ENCODE measurements at regions of chrX and their contacts with region 1.

Region 1: DNA sequence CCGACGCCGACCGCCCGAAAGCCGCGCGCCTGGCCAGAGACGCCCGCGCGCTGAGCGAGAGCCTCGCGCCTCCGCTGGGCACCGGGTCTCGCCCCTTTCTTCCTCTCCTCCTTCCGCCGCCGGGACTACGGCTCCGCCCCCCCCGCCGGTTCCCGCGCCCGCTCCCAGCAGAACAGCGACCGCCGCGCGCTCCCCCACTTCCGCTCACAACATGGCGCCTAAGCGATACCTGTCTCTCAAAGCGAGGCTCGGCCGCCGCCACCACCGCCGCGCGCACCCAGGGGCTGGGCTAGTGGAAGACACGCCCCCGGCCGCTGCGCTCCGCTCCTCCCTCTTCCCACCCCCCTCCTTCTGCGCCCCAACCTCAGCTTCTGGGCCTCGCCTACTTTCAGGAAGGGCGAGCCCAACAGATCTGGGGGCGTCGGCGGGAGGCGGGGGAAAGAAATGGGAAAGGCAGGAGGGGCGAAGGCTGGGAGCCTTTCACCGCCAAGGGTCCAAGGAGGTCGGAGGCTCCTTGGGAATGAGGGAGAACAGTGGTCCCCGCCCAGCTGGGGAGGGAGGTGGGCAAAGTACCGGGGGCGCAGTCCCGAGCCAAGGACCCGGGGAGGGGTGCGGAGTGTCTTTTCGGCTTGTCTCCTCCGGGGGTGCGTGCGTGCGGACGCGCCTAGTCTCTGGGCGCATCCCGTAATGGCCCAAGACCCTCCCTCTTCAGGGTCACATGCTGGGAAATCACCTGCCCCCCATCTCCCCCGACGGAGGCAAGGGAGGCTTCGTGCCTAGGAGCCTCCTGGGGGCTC is at the start of gene RPS6KA3:
- DNase-seq: peak; percentile 93
- ATAC-seq: peak; percentile 83
- H3K4me3 ChIP-seq: peak within 1 kb of the TSS; percentile 73 to 83 (median 77)
- H3K4me3 Mint-ChIP-seq: peak within 1 kb of the TSS; percentile 98
- H3K27ac ChIP-seq: peak within 1 kb of the TSS; percentile 78 to 88
- H3K27ac Mint-ChIP-seq: peak within 1 kb of the TSS; percentile 99
- H3K4me1 ChIP-seq: peaks cover 17 to 26% of the 10 kb centered on the region in 2 donors
- H3K4me1 Mint-ChIP-seq: peaks cover 20% of the 10 kb centered on the region
- H3K27me3 ChIP-seq: no peaks in the 10 kb centered on the region
- H3K27me3 Mint-ChIP-seq: no peaks in the 10 kb centered on the region
- CTCF ChIP-seq: no peak
- total RNA-seq, gene RPS6KA3: 63.0 and 64.0 TPM in 2 replicates

Region 2: GRCh38 chrX:18425199-18426003 is 1841.6 kb before region 1 on chrX and contains the start of gene CDKL5:
- CTCF ChIA-PET with region 1: no interaction called
- POLR2A ChIA-PET with region 1: no interaction called
- intact Hi-C with region 1: loop called (anchors 10 kb)
- DNase-seq: peak; percentile 95
- ATAC-seq: peak; percentile 92
- H3K4me3 ChIP-seq: peak within 1 kb of the TSS; percentile 71 to 91 (median 75)
- H3K4me3 Mint-ChIP-seq: peak within 1 kb of the TSS; percentile 92
- H3K27ac ChIP-seq: peak within 1 kb of the TSS; percentile 82 to 86
- H3K27ac Mint-ChIP-seq: peak within 1 kb of the TSS; percentile 94
- H3K4me1 ChIP-seq: peaks cover 8 to 12% of the 10 kb centered on the region in 2 donors
- H3K4me1 Mint-ChIP-seq: peaks cover 12% of the 10 kb centered on the region
- H3K27me3 ChIP-seq: no peaks in the 10 kb centered on the region
- H3K27me3 Mint-ChIP-seq: no peaks in the 10 kb centered on the region
- CTCF ChIP-seq: no peak
- total RNA-seq, gene CDKL5: 4.6 and 4.7 TPM in 2 replicates

Region 3: GRCh38 chrX:19964017-19964710 is 302.8 kb before region 1 on chrX:
- CTCF ChIA-PET with region 1: no interaction called
- POLR2A ChIA-PET with region 1: no interaction called
- intact Hi-C with region 1: no loop called
- DNase-seq: no peak
- ATAC-seq: no peak
- H3K4me3 ChIP-seq: no peak overlapping the region
- H3K4me3 Mint-ChIP-seq: no peak overlapping the region
- H3K27ac ChIP-seq: no peak overlapping the region
- H3K27ac Mint-ChIP-seq: no peak overlapping the region
- H3K4me1 ChIP-seq: no peaks in the 10 kb centered on the region
- H3K4me1 Mint-ChIP-seq: peaks cover 3% of the 10 kb centered on the region
- H3K27me3 ChIP-seq: no peaks in the 10 kb centered on the region
- H3K27me3 Mint-ChIP-seq: no peaks in the 10 kb centered on the region
- CTCF ChIP-seq: no peak

Region 4: DNA sequence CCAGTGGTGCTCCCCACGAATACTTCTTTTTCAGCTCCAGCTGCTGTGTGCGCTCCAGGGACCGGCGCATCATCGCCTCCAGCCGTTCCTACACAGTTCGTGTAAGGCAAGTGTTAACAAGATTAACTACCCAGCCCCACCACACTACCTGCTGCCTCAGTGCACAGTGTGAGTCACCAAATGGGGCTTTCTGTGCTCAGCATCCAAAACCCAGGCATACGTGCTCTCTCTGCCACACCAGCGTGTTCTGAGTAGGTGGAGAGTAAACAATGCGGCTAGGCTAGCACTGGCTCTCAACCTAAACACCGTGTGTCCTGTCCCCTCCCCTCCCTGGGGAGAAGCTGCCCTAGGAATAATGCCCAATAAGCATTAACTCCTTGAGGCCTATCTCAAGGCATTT is 210.3 kb before region 1 on chrX:
- CTCF ChIA-PET with region 1: no interaction called
- POLR2A ChIA-PET with region 1: no interaction called
- intact Hi-C with region 1: no loop called
- DNase-seq: no peak
- ATAC-seq: no peak
- H3K4me3 ChIP-seq: no peak overlapping the region
- H3K4me3 Mint-ChIP-seq: no peak overlapping the region
- H3K27ac ChIP-seq: no peak overlapping the region
- H3K27ac Mint-ChIP-seq: no peak overlapping the region
- H3K4me1 ChIP-seq: peaks cover 15 to 21% of the 10 kb centered on the region in 2 donors
- H3K4me1 Mint-ChIP-seq: peaks cover 18% of the 10 kb centered on the region
- H3K27me3 ChIP-seq: no peaks in the 10 kb centered on the region
- H3K27me3 Mint-ChIP-seq: no peaks in the 10 kb centered on the region
- CTCF ChIP-seq: no peak

Region 5: DNA sequence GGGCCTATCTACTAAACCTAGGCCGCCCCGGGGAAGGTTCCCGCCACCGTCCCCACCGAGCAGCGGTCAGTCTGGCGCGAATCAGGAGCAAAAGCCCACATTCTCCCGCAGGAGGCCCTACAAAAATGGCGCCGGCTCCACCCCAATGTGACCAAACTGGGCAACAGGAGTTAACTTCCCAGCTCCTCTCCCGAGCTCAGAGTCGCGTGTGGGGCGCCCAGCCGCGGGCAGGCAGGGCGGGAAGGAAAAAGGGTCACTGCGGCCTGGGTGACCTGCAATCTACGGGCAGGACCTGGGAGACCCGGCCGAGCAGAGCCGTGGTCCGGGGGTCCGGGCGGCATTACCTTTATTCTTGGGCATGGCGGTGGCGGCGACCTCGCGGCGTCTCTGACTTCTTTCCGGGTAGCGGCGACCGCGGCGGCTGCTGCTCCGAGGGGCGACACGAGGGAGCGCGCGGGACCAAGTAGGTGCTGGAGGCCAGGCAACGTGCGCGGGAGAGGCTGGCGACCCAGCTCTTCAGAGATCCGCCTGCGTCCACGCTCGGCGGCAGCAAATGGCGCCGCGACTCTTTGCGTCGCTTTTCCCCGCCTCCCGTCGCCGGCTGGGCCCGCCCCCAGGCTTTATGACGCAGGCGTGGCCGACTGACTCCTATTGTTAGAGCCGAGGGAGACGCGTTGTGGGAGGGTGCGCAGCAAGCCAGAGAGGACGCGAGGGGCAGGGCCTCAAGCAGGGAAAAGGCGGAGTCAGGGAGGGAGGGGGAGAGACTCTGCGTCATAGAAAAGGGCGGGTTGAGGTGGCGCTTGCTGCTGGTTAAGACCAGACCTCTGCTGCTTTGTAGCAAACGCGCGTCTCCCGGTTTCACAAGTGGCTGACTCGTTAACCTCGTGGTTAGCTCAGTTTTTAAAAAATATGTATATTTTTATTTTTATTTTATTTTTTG is 125.5 kb before region 1 on chrX and contains the start of gene EIF1AX:
- CTCF ChIA-PET with region 1: no interaction called
- POLR2A ChIA-PET with region 1: no interaction called
- intact Hi-C with region 1: loop called (anchors 1 kb)
- DNase-seq: peak; percentile 96
- ATAC-seq: peak; percentile 99
- H3K4me3 ChIP-seq: peak within 1 kb of the TSS; percentile 77 to 98 (median 86)
- H3K4me3 Mint-ChIP-seq: peak within 1 kb of the TSS; percentile 87
- H3K27ac ChIP-seq: peak within 1 kb of the TSS; percentile 74 to 92
- H3K27ac Mint-ChIP-seq: peak within 1 kb of the TSS; percentile 88
- H3K4me1 ChIP-seq: peaks cover 15 to 16% of the 10 kb centered on the region in 2 donors
- H3K4me1 Mint-ChIP-seq: peaks cover 21% of the 10 kb centered on the region
- H3K27me3 ChIP-seq: no peaks in the 10 kb centered on the region
- H3K27me3 Mint-ChIP-seq: no peaks in the 10 kb centered on the region
- CTCF ChIP-seq: no peak
- total RNA-seq, gene EIF1AX: 39.3 and 42.7 TPM in 2 replicates

Region 6: DNA sequence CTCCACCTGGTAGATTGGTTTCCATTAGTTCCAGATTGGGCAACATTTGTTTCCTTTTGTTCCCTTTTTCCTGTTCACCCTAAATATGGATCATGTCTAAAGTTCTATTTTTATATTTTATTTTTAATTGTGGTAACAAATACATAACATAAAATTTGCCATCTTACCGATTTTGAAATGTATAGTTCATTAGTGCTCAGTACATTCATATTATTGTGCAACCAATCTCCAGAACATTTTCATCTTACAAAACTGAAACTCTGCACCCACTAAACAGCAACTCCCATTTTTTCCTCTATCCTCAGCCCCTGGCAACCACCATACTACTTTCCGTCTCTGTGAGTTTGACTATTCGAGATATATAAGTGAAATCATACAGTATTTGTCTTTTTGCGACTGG is 13.9 kb after region 1 on chrX:
- CTCF ChIA-PET with region 1: no interaction called
- POLR2A ChIA-PET with region 1: no interaction called
- intact Hi-C with region 1: no loop called
- DNase-seq: no peak
- ATAC-seq: no peak
- H3K4me3 ChIP-seq: no peak overlapping the region
- H3K4me3 Mint-ChIP-seq: no peak overlapping the region
- H3K27ac ChIP-seq: no peak overlapping the region
- H3K27ac Mint-ChIP-seq: no peak overlapping the region
- H3K4me1 ChIP-seq: no peaks in the 10 kb centered on the region
- H3K4me1 Mint-ChIP-seq: no peaks in the 10 kb centered on the region
- H3K27me3 ChIP-seq: no peaks in the 10 kb centered on the region
- H3K27me3 Mint-ChIP-seq: peaks cover 6% of the 10 kb centered on the region
- CTCF ChIP-seq: no peak

Region 7: DNA sequence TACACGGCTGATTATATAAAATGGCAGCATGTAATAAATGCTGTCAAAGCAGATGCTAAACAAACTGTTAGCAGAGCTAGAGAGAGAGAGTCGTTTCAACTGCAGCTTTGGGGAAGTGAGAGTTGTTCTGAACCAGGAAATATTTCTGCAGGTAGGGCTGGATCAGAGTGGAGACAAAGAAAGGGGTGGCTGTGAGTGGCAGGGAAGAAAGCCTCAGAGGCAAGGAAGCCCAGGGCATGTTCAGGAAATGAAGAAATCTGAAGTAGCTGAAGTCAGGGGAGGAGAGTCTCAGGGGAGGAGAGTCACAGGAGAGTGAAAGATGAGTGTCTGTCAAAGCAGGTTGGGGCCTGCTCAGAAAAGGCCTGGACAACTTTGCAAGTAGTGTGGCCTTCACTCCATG is 48.1 kb after region 1 on chrX:
- CTCF ChIA-PET with region 1: no interaction called
- POLR2A ChIA-PET with region 1: interaction called, 3 read pairs
- intact Hi-C with region 1: loop called (anchors 2 kb)
- DNase-seq: peak; percentile 57
- ATAC-seq: peak; percentile 88
- H3K4me3 ChIP-seq: no peak overlapping the region
- H3K4me3 Mint-ChIP-seq: peak overlapping the region; percentile 7
- H3K27ac ChIP-seq: peak overlapping the region in 1 of 2 donors; percentile 20
- H3K27ac Mint-ChIP-seq: peak overlapping the region; percentile 87
- H3K4me1 ChIP-seq: peaks cover 33 to 47% of the 10 kb centered on the region in 2 donors
- H3K4me1 Mint-ChIP-seq: peaks cover 56% of the 10 kb centered on the region
- H3K27me3 ChIP-seq: no peaks in the 10 kb centered on the region
- H3K27me3 Mint-ChIP-seq: no peaks in the 10 kb centered on the region
- CTCF ChIP-seq: no peak

Region 8: DNA sequence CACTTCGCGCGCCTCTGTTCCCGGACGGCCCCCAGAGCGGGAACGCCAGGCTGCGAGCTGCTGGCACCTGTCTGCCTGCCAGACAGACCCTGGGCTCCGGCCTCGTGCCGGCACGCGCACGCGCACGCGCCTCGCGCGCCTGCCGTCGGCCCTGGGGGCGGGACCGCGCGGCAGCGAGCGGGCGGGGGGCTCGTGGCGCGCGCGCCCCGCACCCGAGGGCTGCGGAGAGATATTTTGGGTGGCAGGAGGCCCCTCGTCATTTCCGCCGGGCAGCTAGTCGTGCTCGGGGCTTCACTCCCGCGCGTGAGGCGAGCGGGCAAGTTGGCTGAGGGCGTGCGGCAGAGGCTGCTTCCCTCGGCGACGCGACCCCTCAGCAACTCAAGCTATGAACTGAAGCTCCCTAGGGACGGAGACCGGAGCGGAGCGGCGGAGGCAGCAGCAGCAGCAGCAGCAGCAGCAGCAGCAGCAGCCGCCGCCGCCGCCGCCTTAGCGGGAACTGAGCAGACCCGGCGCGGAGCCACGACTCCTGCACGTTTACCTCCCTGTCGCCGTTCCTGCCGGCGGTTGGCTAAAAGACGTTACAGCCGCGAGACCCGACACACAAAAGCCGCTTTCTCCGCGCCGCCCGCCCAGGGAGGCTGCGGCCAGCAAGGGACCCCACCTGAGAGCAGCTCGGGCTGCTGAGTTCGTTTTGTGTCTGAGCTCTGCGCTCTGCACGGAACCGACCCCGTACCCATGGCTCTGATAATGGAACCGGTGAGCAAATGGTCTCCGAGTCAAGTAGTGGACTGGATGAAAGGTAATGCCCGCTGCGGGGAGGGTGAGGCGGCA is 1107.4 kb after region 1 on chrX and contains the start of gene CNKSR2:
- CTCF ChIA-PET with region 1: no interaction called
- POLR2A ChIA-PET with region 1: no interaction called
- intact Hi-C with region 1: loop called (anchors 10 kb)
- DNase-seq: peak; percentile 87
- ATAC-seq: peak; percentile 76
- H3K4me3 ChIP-seq: peak within 1 kb of the TSS in 4 of 5 experiments; percentile 74 to 83 (median 82)
- H3K4me3 Mint-ChIP-seq: peak within 1 kb of the TSS; percentile 92
- H3K27ac ChIP-seq: peak within 1 kb of the TSS; percentile 73 to 84
- H3K27ac Mint-ChIP-seq: peak within 1 kb of the TSS; percentile 90
- H3K4me1 ChIP-seq: peaks cover 6 to 18% of the 10 kb centered on the region in 2 donors
- H3K4me1 Mint-ChIP-seq: peaks cover 32% of the 10 kb centered on the region
- H3K27me3 ChIP-seq: no peaks in the 10 kb centered on the region
- H3K27me3 Mint-ChIP-seq: no peaks in the 10 kb centered on the region
- CTCF ChIP-seq: no peak
- total RNA-seq, gene CNKSR2: 18.8 and 22.5 TPM in 2 replicates